ENCODE measurements at regions of chr1 and their contacts with region 1.

Region 1: GRCh38 chr1:96966536-96967138 is 245.1 kb downstream of the PTBP2 start:
- DNase-seq: peak; percentile 80
- H3K4me3 Mint-ChIP-seq: peak overlapping the region; percentile 36
- H3K27ac Mint-ChIP-seq: no peak overlapping the region
- H3K4me1 Mint-ChIP-seq: peaks cover 10% of the 10 kb centered on the region
- H3K27me3 Mint-ChIP-seq: no peaks in the 10 kb centered on the region
- CTCF ChIP-seq: peak; percentile 79

Region 2: DNA sequence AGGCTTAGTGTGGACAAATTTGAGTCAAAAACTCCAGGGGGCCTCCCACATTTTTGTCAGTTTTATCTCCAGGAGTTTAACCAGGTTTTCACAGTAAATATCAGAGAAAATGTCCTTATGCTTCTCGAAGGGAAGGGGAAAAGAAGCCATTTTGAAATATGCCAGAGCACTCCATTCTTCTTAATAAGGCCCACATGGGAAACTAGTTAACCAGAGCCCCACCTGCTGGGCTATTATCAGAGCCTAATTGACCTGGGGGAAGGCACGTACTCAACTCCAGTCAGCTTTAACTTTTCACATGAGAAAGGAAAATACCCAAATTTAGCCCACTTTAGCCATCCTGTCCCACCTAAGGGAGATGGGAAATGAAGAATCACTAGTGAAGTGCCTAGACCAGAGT is 51.3 kb after region 1 on chr1:
- CTCF ChIA-PET with region 1: interaction called, 3 read pairs
- intact Hi-C with region 1: loop called (anchors 1 kb)
- DNase-seq: peak; percentile 11
- H3K4me3 Mint-ChIP-seq: no peak overlapping the region
- H3K27ac Mint-ChIP-seq: no peak overlapping the region
- H3K4me1 Mint-ChIP-seq: no peaks in the 10 kb centered on the region
- H3K27me3 Mint-ChIP-seq: no peaks in the 10 kb centered on the region
- CTCF ChIP-seq: no peak

Region 3: GRCh38 chr1:97050501-97050900 is 83.9 kb after region 1 on chr1:
- CTCF ChIA-PET with region 1: interaction called, 8 read pairs
- intact Hi-C with region 1: loop called (anchors 1 kb)
- DNase-seq: peak; percentile 6
- H3K4me3 Mint-ChIP-seq: no peak overlapping the region
- H3K27ac Mint-ChIP-seq: no peak overlapping the region
- H3K4me1 Mint-ChIP-seq: no peaks in the 10 kb centered on the region
- H3K27me3 Mint-ChIP-seq: no peaks in the 10 kb centered on the region
- CTCF ChIP-seq: peak; percentile 26